HepG2 (cell line): ENCODE measurements at regions of chr1 and their contacts with region 1.

Region 1: GRCh38 chr1:89358287-89358893 is 5.5 kb upstream of the GBP6 start:
- DNase-seq: peak; percentile 64
- ATAC-seq: peak; percentile 81
- H3K4me3 ChIP-seq: no peak overlapping the region
- H3K27ac ChIP-seq: no peak overlapping the region
- H3K4me1 ChIP-seq: peaks cover 27% of the 10 kb centered on the region
- H3K27me3 ChIP-seq: peaks cover 0 to 21% of the 10 kb centered on the region in 2 experiments; a peak in 3 of 5 replicates
- CTCF ChIP-seq: peak; percentile 85
- EP300 ChIP-seq: no peak
- POLR2A ChIP-seq: no peak
- RAD21 ChIP-seq: peak; percentile 31; the same call in 1 of the 2 replicates

Region 2: GRCh38 chr1:88983791-88984559 is 374.4 kb before region 1 on chr1:
- CTCF ChIA-PET with region 1: interaction called, 15 read pairs
- POLR2A ChIA-PET with region 1: no interaction called
- in situ Hi-C with region 1: no loop called
- intact Hi-C with region 1: no loop called
- DNase-seq: peak; percentile 71
- ATAC-seq: peak; percentile 70
- H3K4me3 ChIP-seq: no peak overlapping the region
- H3K27ac ChIP-seq: peak overlapping the region; percentile 35
- H3K4me1 ChIP-seq: peaks cover 62% of the 10 kb centered on the region
- H3K27me3 ChIP-seq: no peaks in the 10 kb centered on the region
- CTCF ChIP-seq: peak; percentile 54
- EP300 ChIP-seq: no peak
- POLR2A ChIP-seq: no peak
- RAD21 ChIP-seq: peak; percentile 43; the same call in 1 of the 2 replicates

Region 3: DNA sequence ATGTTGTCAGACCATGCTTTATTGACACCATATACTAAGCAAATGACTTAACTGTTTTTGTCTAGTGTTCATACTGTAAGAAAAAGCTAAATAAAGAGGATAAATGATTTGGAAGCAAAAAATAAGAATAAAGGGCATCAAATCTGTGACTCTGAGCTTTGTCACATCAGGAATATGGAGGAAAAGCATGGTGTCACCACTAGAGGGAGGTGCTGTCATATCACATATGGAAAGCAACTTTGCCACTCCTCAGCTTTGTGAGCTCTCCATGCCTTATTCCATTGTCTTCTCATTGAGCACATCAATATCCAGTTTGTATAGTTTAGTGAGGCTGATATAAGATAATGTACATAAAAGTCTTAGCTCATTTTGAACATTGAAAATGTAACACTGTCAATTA is 272.6 kb before region 1 on chr1:
- CTCF ChIA-PET with region 1: interaction called, 16 read pairs
- POLR2A ChIA-PET with region 1: no interaction called
- in situ Hi-C with region 1: loop called (anchors 25 kb)
- intact Hi-C with region 1: loop called (anchors 1 kb)
- DNase-seq: peak; percentile 52
- ATAC-seq: peak; percentile 78
- H3K4me3 ChIP-seq: no peak overlapping the region
- H3K27ac ChIP-seq: no peak overlapping the region
- H3K4me1 ChIP-seq: peaks cover 8% of the 10 kb centered on the region; the same call in 1 of the 2 replicates
- H3K27me3 ChIP-seq: no peaks in the 10 kb centered on the region
- CTCF ChIP-seq: peak; percentile 78
- EP300 ChIP-seq: no peak
- POLR2A ChIP-seq: no peak
- RAD21 ChIP-seq: peak; percentile 73

Region 4: GRCh38 chr1:89429062-89429461 is 70.7 kb after region 1 on chr1:
- CTCF ChIA-PET with region 1: no interaction called
- POLR2A ChIA-PET with region 1: no interaction called
- in situ Hi-C with region 1: no loop called
- intact Hi-C with region 1: no loop called
- DNase-seq: no peak
- ATAC-seq: no peak
- H3K4me3 ChIP-seq: no peak overlapping the region
- H3K27ac ChIP-seq: no peak overlapping the region
- H3K4me1 ChIP-seq: no peaks in the 10 kb centered on the region
- H3K27me3 ChIP-seq: no peaks in the 10 kb centered on the region
- CTCF ChIP-seq: no peak
- EP300 ChIP-seq: no peak
- POLR2A ChIP-seq: no peak
- RAD21 ChIP-seq: no peak